ENCODE measurements at regions of chr1 and their contacts with region 1.

Region 1: GRCh38 chr1:46406881-46407608 is 12.9 kb downstream of the FAAH start:
- DNase-seq: no peak
- ATAC-seq: no peak
- H3K4me3 ChIP-seq: peak overlapping the region in 8 of 10 donors; percentile 5 to 38 (median 26)
- H3K27ac ChIP-seq: no peak overlapping the region
- H3K4me1 ChIP-seq: peaks cover 0 to 20% (median 7%) of the 10 kb centered on the region in 9 donors
- H3K27me3 ChIP-seq: no peaks in the 10 kb centered on the region
- CTCF ChIP-seq: no peak

Region 2: GRCh38 chr1:46442317-46443161 is 35.5 kb after region 1 on chr1:
- intact Hi-C with region 1: loop called in 1 of 10 experiments (anchors 2 kb)
- DNase-seq: peak; percentile 72 to 73
- ATAC-seq: peak; percentile 54 to 83 (median 79)
- H3K4me3 ChIP-seq: peak overlapping the region in 9 of 10 donors; percentile 25 to 51 (median 47)
- H3K27ac ChIP-seq: peak overlapping the region in 1 of 10 donors; percentile 50
- H3K4me1 ChIP-seq: peaks cover 0 to 14% (median 3%) of the 10 kb centered on the region in 9 donors
- H3K27me3 ChIP-seq: peaks cover 0 to 28% (median 14%) of the 10 kb centered on the region in 7 donors
- CTCF ChIP-seq: peak; percentile 72 to 93 (median 88)

Region 3: GRCh38 chr1:46466477-46467182 is 59.6 kb after region 1 on chr1:
- intact Hi-C with region 1: no loop called
- DNase-seq: peak in 1 of 2 donors; percentile 39
- ATAC-seq: peak; percentile 40 to 71 (median 63)
- H3K4me3 ChIP-seq: peak overlapping the region; percentile 39 to 84 (median 68)
- H3K27ac ChIP-seq: peak overlapping the region in 1 of 10 donors; percentile 3
- H3K4me1 ChIP-seq: peaks cover 4 to 11% (median 9%) of the 10 kb centered on the region in 9 donors
- H3K27me3 ChIP-seq: peaks cover 0 to 89% (median 62%) of the 10 kb centered on the region in 7 donors
- CTCF ChIP-seq: no peak